HEK293 (cell line): ENCODE measurements at regions of chr1 and their contacts with region 1.

Region 1: DNA sequence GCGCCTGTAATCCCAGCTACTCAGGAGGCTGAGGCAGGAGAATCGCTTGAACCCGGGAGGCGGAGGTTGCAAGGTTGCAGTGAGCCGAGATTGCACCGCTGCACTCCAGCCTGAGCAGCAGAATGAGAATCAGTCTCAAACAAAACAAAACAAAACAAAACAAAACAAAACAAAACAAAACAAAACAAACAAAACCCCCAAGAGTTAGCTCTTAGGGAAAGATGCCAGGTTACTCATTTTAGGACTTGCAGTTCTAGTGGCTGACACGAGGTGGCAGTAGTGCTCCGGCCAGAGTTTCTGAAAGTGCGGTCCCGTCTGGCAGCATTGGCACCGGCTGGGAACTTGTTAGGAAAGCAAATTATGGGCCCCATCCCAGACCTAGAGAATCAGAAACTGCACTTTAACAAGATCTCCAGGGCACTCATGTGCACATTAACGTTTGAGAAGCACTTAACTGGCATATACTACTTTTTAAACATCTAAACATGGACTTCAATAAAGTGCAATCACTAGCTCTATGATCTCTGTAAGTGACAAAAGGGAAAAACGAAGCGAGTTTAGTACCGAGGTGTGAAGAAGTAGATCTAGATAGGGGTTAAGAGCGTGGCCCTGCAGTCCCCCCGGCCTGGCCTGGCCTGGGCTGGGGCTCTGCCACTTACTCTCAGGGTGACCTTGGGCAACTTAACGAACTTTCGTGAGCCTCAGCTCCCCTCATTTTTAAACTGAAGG is 41.9 kb upstream of the TNFRSF1B start:
- H3K4me3 ChIP-seq: no peak overlapping the region
- H3K27ac ChIP-seq: no peak overlapping the region
- H3K4me1 ChIP-seq: no peaks in the 10 kb centered on the region
- CTCF ChIP-seq: peak; percentile 91

Region 2: GRCh38 chr1:12107736-12108135 is 17.1 kb before region 1 on chr1:
- CTCF ChIA-PET with region 1: interaction called, 12 read pairs
- POLR2A ChIA-PET with region 1: no interaction called
- H3K4me3 ChIP-seq: no peak overlapping the region
- H3K27ac ChIP-seq: no peak overlapping the region
- H3K4me1 ChIP-seq: no peaks in the 10 kb centered on the region
- CTCF ChIP-seq: no peak

Region 3: DNA sequence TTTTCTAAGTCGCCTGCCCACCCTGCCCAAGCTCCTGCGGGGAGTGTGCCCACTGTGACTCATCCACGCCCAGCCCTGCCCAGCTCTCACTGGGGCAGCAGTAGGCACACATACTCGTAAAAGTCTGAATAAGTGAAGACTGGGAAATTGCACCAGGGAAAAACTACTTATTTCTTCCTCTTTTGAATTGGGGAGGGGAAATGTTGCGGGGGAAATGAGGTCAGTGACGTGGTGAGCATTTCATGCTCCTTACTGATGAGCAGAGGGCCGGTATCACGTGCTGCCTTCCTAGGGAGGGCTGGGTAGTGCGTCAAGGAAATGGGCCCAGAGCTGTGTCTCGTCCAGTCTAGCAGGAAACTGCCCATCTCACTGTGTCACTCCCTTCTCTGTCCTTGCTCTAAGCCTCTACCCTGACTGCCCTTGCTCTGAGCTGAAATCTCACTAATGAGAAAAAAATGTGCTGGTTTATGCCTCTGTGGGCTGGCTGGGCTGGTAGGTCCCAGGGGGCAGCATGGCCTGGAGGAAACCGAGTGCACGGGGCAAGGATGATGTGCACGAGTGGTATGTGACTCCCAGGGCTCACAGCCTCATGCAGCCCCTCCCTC is 28.4 kb after region 1 on chr1:
- CTCF ChIA-PET with region 1: interaction called, 29 read pairs
- POLR2A ChIA-PET with region 1: no interaction called
- H3K4me3 ChIP-seq: no peak overlapping the region
- H3K27ac ChIP-seq: no peak overlapping the region
- H3K4me1 ChIP-seq: no peaks in the 10 kb centered on the region
- CTCF ChIP-seq: no peak

Region 4: GRCh38 chr1:12185918-12186678 is 61.2 kb after region 1 on chr1:
- CTCF ChIA-PET with region 1: interaction called, 12 read pairs
- POLR2A ChIA-PET with region 1: no interaction called
- H3K4me3 ChIP-seq: no peak overlapping the region
- H3K27ac ChIP-seq: no peak overlapping the region
- H3K4me1 ChIP-seq: no peaks in the 10 kb centered on the region
- CTCF ChIP-seq: no peak

Region 5: GRCh38 chr1:12208764-12209494 is 84.1 kb after region 1 on chr1:
- CTCF ChIA-PET with region 1: interaction called, 300 read pairs
- POLR2A ChIA-PET with region 1: interaction called, 4 read pairs
- H3K4me3 ChIP-seq: no peak overlapping the region
- H3K27ac ChIP-seq: no peak overlapping the region
- H3K4me1 ChIP-seq: no peaks in the 10 kb centered on the region
- CTCF ChIP-seq: peak; percentile 90

Region 6: DNA sequence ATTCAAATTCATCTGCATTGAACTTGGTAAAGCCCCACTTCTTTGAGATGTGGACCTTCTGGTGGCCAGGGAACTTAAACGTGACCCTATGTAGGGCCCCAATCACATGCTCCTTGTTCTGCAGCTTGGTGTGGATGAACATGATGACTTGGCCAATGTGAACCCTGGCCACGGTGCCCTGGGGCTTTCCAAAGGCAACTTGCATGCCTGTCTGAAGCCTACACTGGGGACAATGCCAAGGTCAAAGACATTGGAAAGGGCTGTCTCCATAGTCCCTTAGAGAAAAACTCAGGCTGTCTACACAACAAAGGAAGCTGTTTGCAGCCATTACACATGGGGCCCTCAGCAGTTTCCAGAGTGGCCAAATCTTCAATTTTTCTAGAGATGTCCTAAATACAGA is 96.0 kb after region 1 on chr1:
- CTCF ChIA-PET with region 1: interaction called, 35 read pairs
- POLR2A ChIA-PET with region 1: no interaction called
- H3K4me3 ChIP-seq: no peak overlapping the region
- H3K27ac ChIP-seq: no peak overlapping the region
- H3K4me1 ChIP-seq: no peaks in the 10 kb centered on the region
- CTCF ChIP-seq: no peak